Mammary epithelial cell (primary cell): ENCODE measurements at regions of chr7 and their contacts with region 1.

Region 1: GRCh38 chr7:4849369-4849768 is 12.5 kb downstream of the PAPOLB start:
- DNase-seq: peak; percentile 43
- H3K4me3 ChIP-seq: no peak overlapping the region
- H3K27ac ChIP-seq: no peak overlapping the region
- H3K4me1 ChIP-seq: no peaks in the 10 kb centered on the region
- H3K27me3 ChIP-seq: no peaks in the 10 kb centered on the region
- CTCF ChIP-seq: peak in 1 of 2 donors; percentile 55

Region 2: DNA sequence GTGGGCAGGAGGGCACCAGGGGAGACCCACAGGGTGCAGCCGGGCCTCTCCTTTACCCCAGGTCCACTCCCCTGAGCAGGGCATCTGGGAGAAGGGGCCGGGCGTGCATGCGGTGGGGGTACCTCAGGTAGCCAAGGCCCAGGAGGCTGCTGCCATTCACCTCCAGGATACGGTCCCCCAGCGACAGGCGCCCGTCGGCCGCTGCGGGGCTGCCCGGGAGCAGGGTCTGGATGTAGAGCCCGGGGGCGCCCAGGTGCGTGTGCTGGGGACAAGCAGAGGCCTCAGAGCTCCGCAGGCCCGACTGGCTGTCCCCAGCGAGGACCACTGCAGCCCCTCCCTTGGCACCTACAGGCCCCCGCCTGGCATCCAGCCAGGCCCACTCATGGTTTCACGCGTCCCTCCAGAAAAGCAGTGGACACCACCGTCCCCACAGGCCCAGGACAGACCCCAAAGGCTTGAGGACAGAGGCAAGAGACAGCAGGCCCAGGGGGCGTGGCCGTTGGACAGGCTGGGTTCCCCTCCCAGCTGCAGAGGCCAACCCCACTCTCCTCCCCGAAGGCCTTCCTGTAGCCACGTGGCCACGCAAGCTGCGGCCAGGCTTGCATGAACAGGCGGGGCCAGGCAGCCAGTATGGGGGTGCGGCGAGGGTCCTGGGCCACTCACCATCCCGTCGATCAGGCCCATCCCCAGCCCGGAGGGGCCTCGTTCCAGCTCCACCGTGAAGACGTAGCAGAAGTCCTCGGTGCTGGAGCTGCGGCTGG is 49.7 kb before region 1 on chr7:
- CTCF ChIA-PET with region 1: no interaction called
- dilution Hi-C with region 1: no loop called
- in situ Hi-C with region 1: no loop called
- intact Hi-C with region 1: no loop called
- DNase-seq: peak; percentile 12
- H3K4me3 ChIP-seq: no peak overlapping the region
- H3K27ac ChIP-seq: no peak overlapping the region
- H3K4me1 ChIP-seq: peaks cover 8% of the 10 kb centered on the region
- H3K27me3 ChIP-seq: no peaks in the 10 kb centered on the region
- CTCF ChIP-seq: no peak

Region 3: DNA sequence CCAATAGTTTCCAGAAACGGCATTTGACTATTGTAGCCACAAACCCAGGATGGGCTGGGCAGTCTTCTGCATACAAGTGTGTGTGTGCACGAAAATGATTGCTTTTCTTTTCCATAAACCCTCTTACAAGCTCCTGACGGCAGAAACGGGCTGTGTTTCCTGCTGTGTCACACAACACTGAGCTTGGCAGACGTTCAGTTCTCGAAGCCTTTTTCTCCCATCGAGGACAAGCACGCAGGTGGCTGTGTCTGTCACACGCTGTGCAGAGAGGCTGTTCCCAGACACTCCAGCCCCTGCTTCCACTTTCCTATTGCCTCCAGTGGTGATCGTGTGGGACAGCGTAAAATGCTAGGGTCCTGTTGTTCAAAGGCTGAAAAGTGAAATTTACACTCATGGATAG is 228.4 kb after region 1 on chr7:
- CTCF ChIA-PET with region 1: no interaction called
- dilution Hi-C with region 1: no loop called
- in situ Hi-C with region 1: loop called in 1 of 2 experiments (anchors 25 kb)
- intact Hi-C with region 1: no loop called
- DNase-seq: no peak
- H3K4me3 ChIP-seq: no peak overlapping the region
- H3K27ac ChIP-seq: no peak overlapping the region
- H3K4me1 ChIP-seq: no peaks in the 10 kb centered on the region
- H3K27me3 ChIP-seq: no peaks in the 10 kb centered on the region
- CTCF ChIP-seq: no peak

Region 4: DNA sequence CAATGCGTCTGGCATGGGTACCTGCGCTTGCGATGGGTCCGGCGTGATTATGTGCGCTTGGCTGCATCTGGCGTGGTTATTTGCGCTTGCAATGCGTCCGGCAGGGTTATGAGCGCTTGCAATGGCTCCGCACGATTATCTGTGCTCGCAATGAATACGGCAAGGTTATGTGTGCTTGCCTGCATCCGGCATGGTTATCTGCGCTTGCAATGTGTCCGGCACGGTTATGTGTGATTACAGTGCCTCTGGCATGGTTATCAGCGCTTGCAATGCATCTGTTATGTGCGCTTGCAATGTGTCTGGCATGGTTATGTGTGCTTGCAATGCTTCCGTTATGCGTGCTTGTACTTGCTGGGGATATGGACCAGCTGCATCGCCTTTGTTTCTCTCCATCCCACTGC is 233.9 kb after region 1 on chr7:
- CTCF ChIA-PET with region 1: no interaction called
- dilution Hi-C with region 1: no loop called
- in situ Hi-C with region 1: loop called in 1 of 2 experiments (anchors 25 kb)
- intact Hi-C with region 1: loop called (anchors 1 kb)
- DNase-seq: no peak
- H3K4me3 ChIP-seq: no peak overlapping the region
- H3K27ac ChIP-seq: no peak overlapping the region
- H3K4me1 ChIP-seq: no peaks in the 10 kb centered on the region
- H3K27me3 ChIP-seq: no peaks in the 10 kb centered on the region
- CTCF ChIP-seq: no peak

Region 5: GRCh38 chr7:5139998-5140397 is 290.6 kb after region 1 on chr7:
- CTCF ChIA-PET with region 1: interaction called, 12 read pairs
- dilution Hi-C with region 1: no loop called
- in situ Hi-C with region 1: no loop called
- intact Hi-C with region 1: no loop called
- DNase-seq: no peak
- H3K4me3 ChIP-seq: no peak overlapping the region
- H3K27ac ChIP-seq: no peak overlapping the region
- H3K4me1 ChIP-seq: peaks cover 6% of the 10 kb centered on the region
- H3K27me3 ChIP-seq: no peaks in the 10 kb centered on the region
- CTCF ChIP-seq: peak in 1 of 2 donors; percentile 25